ENCODE measurements at regions of chr14 and their contacts with region 1.

Region 1: GRCh38 chr14:102304611-102305509 is at the start of gene MOK:
- DNase-seq: peak; percentile 95
- ATAC-seq: peak; percentile 98
- H3K4me3 ChIP-seq: peak within 1 kb of the TSS; percentile 79
- H3K27ac ChIP-seq: peak within 1 kb of the TSS; percentile 24; the same call in 1 of the 2 replicates
- H3K4me1 ChIP-seq: no peaks in the 10 kb centered on the region
- H3K27me3 ChIP-seq: no peaks in the 10 kb centered on the region
- CTCF ChIP-seq: no peak
- POLR2A ChIP-seq: 0 out of 2 replicates have a peak, but pooled peaks have one; percentile 43
- RAD21 ChIP-seq: no peak
- total RNA-seq, gene MOK: 16.8 and 24.4 TPM in 2 replicates

Region 2: DNA sequence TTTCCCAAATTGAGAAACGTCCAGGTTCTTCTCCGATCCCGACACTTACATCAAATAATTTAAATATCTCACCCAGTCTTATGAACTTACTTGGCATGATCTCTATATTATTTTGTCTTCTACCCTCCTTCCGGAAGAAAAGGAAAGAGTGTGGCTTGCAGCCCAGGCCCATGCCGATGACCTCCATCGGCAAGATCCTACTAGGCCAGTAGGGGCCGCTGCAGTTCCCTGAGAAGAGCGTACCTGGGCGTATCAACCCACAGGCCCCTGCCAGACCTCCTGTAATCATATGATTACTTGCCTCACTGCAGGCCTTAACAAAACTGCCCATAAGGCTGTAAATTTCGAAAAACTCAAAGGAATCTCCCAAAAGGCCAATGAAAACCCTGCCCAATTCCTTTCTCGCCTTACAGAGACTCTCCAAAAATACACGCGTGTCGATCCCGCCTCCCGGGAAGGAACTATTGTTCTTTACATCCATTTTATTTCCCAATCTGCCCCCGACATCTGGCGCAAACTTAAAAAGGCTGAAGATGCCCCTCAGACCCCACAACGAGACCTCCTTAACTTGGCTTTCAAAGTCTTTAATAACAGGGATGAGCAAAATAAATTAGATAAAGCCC is 69.5 kb before region 1 on chr14:
- CTCF ChIA-PET with region 1: no interaction called
- POLR2A ChIA-PET with region 1: no interaction called
- dilution Hi-C with region 1: no loop called
- in situ Hi-C with region 1: loop called (anchors 5 kb)
- intact Hi-C with region 1: loop called (anchors 2 kb)
- DNase-seq: peak; percentile 89
- ATAC-seq: peak; percentile 94
- H3K4me3 ChIP-seq: no peak overlapping the region
- H3K27ac ChIP-seq: no peak overlapping the region; the same call in 1 of the 2 replicates
- H3K4me1 ChIP-seq: peaks cover 4% of the 10 kb centered on the region
- H3K27me3 ChIP-seq: no peaks in the 10 kb centered on the region
- CTCF ChIP-seq: peak; percentile 84
- POLR2A ChIP-seq: no peak
- RAD21 ChIP-seq: peak; percentile 86

Region 3: GRCh38 chr14:102524466-102525218 is 219.8 kb after region 1 on chr14:
- CTCF ChIA-PET with region 1: no interaction called
- POLR2A ChIA-PET with region 1: no interaction called
- dilution Hi-C with region 1: no loop called
- in situ Hi-C with region 1: no loop called
- intact Hi-C with region 1: no loop called
- DNase-seq: peak; percentile 98
- ATAC-seq: peak; percentile 99
- H3K4me3 ChIP-seq: peak overlapping the region; percentile 62
- H3K27ac ChIP-seq: peak overlapping the region; percentile 62
- H3K4me1 ChIP-seq: peaks cover 6% of the 10 kb centered on the region; the same call in 1 of the 2 replicates
- H3K27me3 ChIP-seq: no peaks in the 10 kb centered on the region
- CTCF ChIP-seq: peak; percentile 99
- POLR2A ChIP-seq: peak; percentile 33; the same call in 1 of the 2 replicates
- RAD21 ChIP-seq: peak; percentile 88

Measured in IMR-90 (cell line).